CD14-positive monocyte (primary cell): ENCODE measurements at regions of chr1 and their contacts with region 1.

Region 1: DNA sequence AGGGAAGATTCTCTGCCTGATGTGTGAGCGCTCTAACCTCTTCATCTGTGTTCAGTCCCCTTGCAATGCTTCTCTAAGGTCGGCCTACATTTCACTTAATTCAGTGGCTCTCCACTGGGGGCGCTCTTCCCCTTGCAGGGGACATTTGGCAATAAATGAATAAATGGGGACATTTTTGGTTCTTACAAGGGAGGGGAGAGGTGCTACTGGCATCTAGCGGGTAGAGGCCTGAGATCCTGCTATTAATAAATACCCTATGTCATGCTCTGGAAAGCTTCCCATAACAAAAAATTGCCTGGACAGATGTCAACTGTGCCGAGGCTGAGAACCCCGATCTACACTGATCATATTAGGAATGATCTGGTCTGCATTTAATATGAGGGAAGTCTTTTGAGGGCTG is 25.9 kb upstream of the DNAJC11 start:
- DNase-seq: peak; percentile 62 to 70 (median 70)
- H3K4me3 ChIP-seq: no peak overlapping the region
- H3K4me3 Mint-ChIP-seq: no peak overlapping the region
- H3K27ac ChIP-seq: no peak overlapping the region
- H3K27ac Mint-ChIP-seq: peak overlapping the region in 1 of 7 donors; percentile 37
- H3K4me1 ChIP-seq: no peaks in the 10 kb centered on the region
- H3K4me1 Mint-ChIP-seq: peaks cover 4% of the 10 kb centered on the region
- H3K27me3 ChIP-seq: no peaks in the 10 kb centered on the region
- H3K27me3 Mint-ChIP-seq: peaks cover 4 to 10% (median 4%) of the 10 kb centered on the region in 3 donors
- CTCF ChIP-seq: peak; percentile 93

Region 2: GRCh38 chr1:6275826-6276782 is 451.4 kb before region 1 on chr1:
- intact Hi-C with region 1: no loop called
- DNase-seq: no peak
- H3K4me3 ChIP-seq: no peak overlapping the region
- H3K4me3 Mint-ChIP-seq: no peak overlapping the region
- H3K27ac ChIP-seq: no peak overlapping the region
- H3K27ac Mint-ChIP-seq: no peak overlapping the region
- H3K4me1 ChIP-seq: no peaks in the 10 kb centered on the region
- H3K4me1 Mint-ChIP-seq: no peaks in the 10 kb centered on the region
- H3K27me3 ChIP-seq: no peaks in the 10 kb centered on the region
- H3K27me3 Mint-ChIP-seq: no peaks in the 10 kb centered on the region
- CTCF ChIP-seq: no peak

Region 3: GRCh38 chr1:6776895-6777294 is 49.4 kb after region 1 on chr1:
- intact Hi-C with region 1: loop called (anchors 5 kb)
- DNase-seq: peak in 1 of 3 donors; percentile 26
- H3K4me3 ChIP-seq: no peak overlapping the region
- H3K4me3 Mint-ChIP-seq: peak overlapping the region in 1 of 2 donors; percentile 52
- H3K27ac ChIP-seq: no peak overlapping the region
- H3K27ac Mint-ChIP-seq: peak overlapping the region in 2 of 7 donors; percentile 2 to 61
- H3K4me1 ChIP-seq: peaks cover 5 to 14% of the 10 kb centered on the region in 2 donors
- H3K4me1 Mint-ChIP-seq: peaks cover 20% of the 10 kb centered on the region
- H3K27me3 ChIP-seq: no peaks in the 10 kb centered on the region
- H3K27me3 Mint-ChIP-seq: peaks cover 1 to 8% (median 1%) of the 10 kb centered on the region in 3 donors
- CTCF ChIP-seq: no peak

Region 4: DNA sequence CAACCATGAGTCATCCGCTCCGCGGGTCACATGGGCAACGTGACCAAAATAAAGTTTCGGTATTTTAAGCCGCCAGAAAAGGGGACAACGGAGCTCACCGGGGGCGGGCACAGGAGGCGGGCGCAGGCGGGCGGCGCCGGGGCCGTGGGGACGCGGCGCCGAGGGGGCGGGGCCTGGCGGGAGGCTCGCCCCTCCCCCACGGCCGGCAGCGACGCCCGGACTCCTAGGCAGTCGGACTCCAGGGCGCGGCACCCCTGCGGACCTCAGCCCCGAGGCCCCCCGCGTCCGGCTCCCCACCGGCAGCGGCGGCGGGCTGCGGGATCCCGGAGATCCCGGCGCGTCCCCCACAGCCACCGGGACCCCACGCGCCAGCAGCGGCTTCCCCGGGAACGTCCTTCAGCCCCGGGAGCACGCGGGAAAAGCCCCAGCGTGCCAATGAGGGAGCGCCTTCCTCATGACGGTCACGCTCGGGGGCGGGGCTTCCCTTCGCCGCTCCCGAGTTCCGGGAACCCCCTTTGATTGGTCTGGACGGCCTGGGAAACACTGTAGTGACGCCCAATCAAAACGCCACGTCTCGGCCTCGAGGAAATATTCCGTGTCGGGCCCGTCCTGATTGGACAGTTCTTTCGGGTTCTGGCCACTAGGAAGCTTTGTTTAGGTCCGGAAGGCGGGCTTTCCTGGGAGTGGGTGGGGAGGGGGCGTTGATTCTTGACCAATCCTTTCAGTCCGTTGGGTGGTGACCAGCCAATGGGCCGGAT is 57.2 kb after region 1 on chr1:
- intact Hi-C with region 1: loop called (anchors 5 kb)
- DNase-seq: peak; percentile 100
- H3K4me3 ChIP-seq: peak overlapping the region; percentile 75 to 87 (median 85)
- H3K4me3 Mint-ChIP-seq: peak overlapping the region; percentile 85 to 93
- H3K27ac ChIP-seq: peak overlapping the region; percentile 97 to 98
- H3K27ac Mint-ChIP-seq: peak overlapping the region; percentile 93 to 98 (median 97)
- H3K4me1 ChIP-seq: peaks cover 25 to 29% of the 10 kb centered on the region in 2 donors
- H3K4me1 Mint-ChIP-seq: peaks cover 49% of the 10 kb centered on the region
- H3K27me3 ChIP-seq: no peaks in the 10 kb centered on the region
- H3K27me3 Mint-ChIP-seq: peaks cover 0 to 3% (median 0%) of the 10 kb centered on the region in 3 donors
- CTCF ChIP-seq: no peak

Region 5: GRCh38 chr1:6880951-6881690 is 153.6 kb after region 1 on chr1:
- intact Hi-C with region 1: loop called in 1 of 2 experiments (anchors 5 kb)
- DNase-seq: no peak
- H3K4me3 ChIP-seq: no peak overlapping the region
- H3K4me3 Mint-ChIP-seq: no peak overlapping the region
- H3K27ac ChIP-seq: no peak overlapping the region
- H3K27ac Mint-ChIP-seq: no peak overlapping the region
- H3K4me1 ChIP-seq: no peaks in the 10 kb centered on the region
- H3K4me1 Mint-ChIP-seq: no peaks in the 10 kb centered on the region
- H3K27me3 ChIP-seq: no peaks in the 10 kb centered on the region
- H3K27me3 Mint-ChIP-seq: peaks cover 0 to 3% (median 0%) of the 10 kb centered on the region in 3 donors
- CTCF ChIP-seq: no peak

Region 6: DNA sequence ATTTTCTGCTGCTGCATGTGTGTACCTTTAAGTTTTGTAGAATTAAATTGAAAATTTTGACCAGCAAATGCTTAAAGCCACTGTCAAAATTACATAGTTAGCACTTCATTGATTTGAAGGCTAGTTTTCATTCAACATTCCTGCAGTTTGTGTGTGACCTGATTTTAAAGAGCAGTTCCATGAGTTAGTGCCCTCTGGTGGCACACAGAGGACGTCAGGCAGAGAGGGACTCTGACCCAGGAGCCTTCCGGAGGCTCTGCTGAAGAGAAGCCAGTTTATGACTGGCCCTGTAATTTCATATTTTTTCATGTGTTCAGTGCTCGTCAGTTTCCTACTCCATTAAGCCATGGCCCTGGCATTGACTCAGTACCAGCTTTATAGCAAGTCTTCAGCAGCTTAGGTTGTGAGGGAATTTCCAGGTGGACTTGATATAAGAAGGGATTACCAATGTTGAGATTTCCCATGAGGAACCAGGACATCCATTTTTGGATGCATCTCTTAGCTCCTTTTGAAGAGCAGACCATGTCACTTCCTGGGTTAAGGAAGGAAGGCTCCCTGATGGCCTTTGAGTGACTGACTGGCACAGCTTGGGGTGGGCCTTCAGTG is 162.4 kb after region 1 on chr1:
- intact Hi-C with region 1: loop called in 1 of 2 experiments (anchors 5 kb)
- DNase-seq: peak; percentile 16 to 39 (median 35)
- H3K4me3 ChIP-seq: no peak overlapping the region
- H3K4me3 Mint-ChIP-seq: no peak overlapping the region
- H3K27ac ChIP-seq: no peak overlapping the region
- H3K27ac Mint-ChIP-seq: no peak overlapping the region
- H3K4me1 ChIP-seq: no peaks in the 10 kb centered on the region
- H3K4me1 Mint-ChIP-seq: no peaks in the 10 kb centered on the region
- H3K27me3 ChIP-seq: no peaks in the 10 kb centered on the region
- H3K27me3 Mint-ChIP-seq: no peaks in the 10 kb centered on the region
- CTCF ChIP-seq: peak; percentile 84

Region 7: GRCh38 chr1:7070389-7071029 is 343.0 kb after region 1 on chr1:
- intact Hi-C with region 1: loop called in 1 of 2 experiments (anchors 5 kb)
- DNase-seq: peak; percentile 12 to 37 (median 32)
- H3K4me3 ChIP-seq: no peak overlapping the region
- H3K4me3 Mint-ChIP-seq: peak overlapping the region in 1 of 2 donors; percentile 52
- H3K27ac ChIP-seq: no peak overlapping the region
- H3K27ac Mint-ChIP-seq: no peak overlapping the region
- H3K4me1 ChIP-seq: no peaks in the 10 kb centered on the region
- H3K4me1 Mint-ChIP-seq: peaks cover 3% of the 10 kb centered on the region
- H3K27me3 ChIP-seq: peaks cover 0 to 9% of the 10 kb centered on the region in 2 donors
- H3K27me3 Mint-ChIP-seq: peaks cover 10 to 18% (median 13%) of the 10 kb centered on the region in 3 donors
- CTCF ChIP-seq: peak; percentile 76

Region 8: GRCh38 chr1:7218210-7218832 is 490.8 kb after region 1 on chr1:
- intact Hi-C with region 1: loop called in 1 of 2 experiments (anchors 10 kb)
- DNase-seq: peak in 2 of 3 donors; percentile 8 to 10
- H3K4me3 ChIP-seq: no peak overlapping the region
- H3K4me3 Mint-ChIP-seq: no peak overlapping the region
- H3K27ac ChIP-seq: no peak overlapping the region
- H3K27ac Mint-ChIP-seq: no peak overlapping the region
- H3K4me1 ChIP-seq: no peaks in the 10 kb centered on the region
- H3K4me1 Mint-ChIP-seq: no peaks in the 10 kb centered on the region
- H3K27me3 ChIP-seq: no peaks in the 10 kb centered on the region
- H3K27me3 Mint-ChIP-seq: peaks cover 0 to 2% (median 0%) of the 10 kb centered on the region in 3 donors
- CTCF ChIP-seq: peak; percentile 68